ENCODE measurements at regions of chr3 and their contacts with region 1.

Region 1: GRCh38 chr3:24237971-24238767 is 256.5 kb downstream of the THRB start:
- DNase-seq: peak; percentile 69
- H3K4me3 ChIP-seq: no peak overlapping the region
- H3K27ac ChIP-seq: peak overlapping the region; percentile 8 to 24
- H3K4me1 ChIP-seq: no peaks in the 10 kb centered on the region
- H3K27me3 ChIP-seq: no peaks in the 10 kb centered on the region
- CTCF ChIP-seq: peak; percentile 59 to 85 (median 76)
- POLR2A ChIP-seq: no peak

Region 2: DNA sequence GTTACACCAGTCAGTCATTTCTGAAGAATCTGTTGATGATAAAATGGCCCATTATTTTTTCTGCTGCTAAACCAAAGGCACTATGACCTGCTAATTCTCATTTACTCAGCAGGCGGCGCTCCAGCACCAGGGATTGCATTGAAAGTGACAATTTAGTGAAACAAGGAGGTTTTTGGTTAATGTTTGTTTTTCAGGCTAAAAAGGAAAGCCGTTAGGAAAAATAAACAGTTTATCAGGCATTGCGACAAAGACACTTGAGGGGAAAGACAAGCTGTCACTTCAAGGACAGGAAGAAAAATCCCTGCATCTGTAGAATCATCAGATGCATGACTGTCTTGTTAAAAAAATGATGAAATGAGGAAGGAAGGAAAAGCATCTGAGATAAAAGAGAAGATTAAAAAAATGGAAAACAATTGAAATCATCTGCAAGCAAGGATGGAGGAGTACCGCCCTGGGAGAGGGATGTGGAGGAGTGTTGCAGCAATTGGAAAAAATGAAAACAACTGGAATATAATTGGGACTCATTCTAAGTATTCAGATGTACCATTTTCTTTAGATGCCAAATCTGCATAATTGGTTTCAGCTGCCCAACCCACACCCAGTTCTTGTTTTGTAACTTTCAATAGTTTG is 239.0 kb before region 1 on chr3:
- intact Hi-C with region 1: loop called (anchors 2 kb)
- DNase-seq: peak; percentile 58
- H3K4me3 ChIP-seq: no peak overlapping the region
- H3K27ac ChIP-seq: no peak overlapping the region
- H3K4me1 ChIP-seq: no peaks in the 10 kb centered on the region
- H3K27me3 ChIP-seq: no peaks in the 10 kb centered on the region
- CTCF ChIP-seq: peak; percentile 59 to 94 (median 86)
- POLR2A ChIP-seq: no peak

Region 3: GRCh38 chr3:24069045-24069444 is 169.1 kb before region 1 on chr3:
- intact Hi-C with region 1: loop called (anchors 5 kb)
- DNase-seq: no peak
- H3K4me3 ChIP-seq: no peak overlapping the region
- H3K27ac ChIP-seq: no peak overlapping the region
- H3K4me1 ChIP-seq: no peaks in the 10 kb centered on the region
- H3K27me3 ChIP-seq: no peaks in the 10 kb centered on the region
- CTCF ChIP-seq: peak in 2 of 4 experiments; percentile 33 to 39
- POLR2A ChIP-seq: no peak

Region 4: DNA sequence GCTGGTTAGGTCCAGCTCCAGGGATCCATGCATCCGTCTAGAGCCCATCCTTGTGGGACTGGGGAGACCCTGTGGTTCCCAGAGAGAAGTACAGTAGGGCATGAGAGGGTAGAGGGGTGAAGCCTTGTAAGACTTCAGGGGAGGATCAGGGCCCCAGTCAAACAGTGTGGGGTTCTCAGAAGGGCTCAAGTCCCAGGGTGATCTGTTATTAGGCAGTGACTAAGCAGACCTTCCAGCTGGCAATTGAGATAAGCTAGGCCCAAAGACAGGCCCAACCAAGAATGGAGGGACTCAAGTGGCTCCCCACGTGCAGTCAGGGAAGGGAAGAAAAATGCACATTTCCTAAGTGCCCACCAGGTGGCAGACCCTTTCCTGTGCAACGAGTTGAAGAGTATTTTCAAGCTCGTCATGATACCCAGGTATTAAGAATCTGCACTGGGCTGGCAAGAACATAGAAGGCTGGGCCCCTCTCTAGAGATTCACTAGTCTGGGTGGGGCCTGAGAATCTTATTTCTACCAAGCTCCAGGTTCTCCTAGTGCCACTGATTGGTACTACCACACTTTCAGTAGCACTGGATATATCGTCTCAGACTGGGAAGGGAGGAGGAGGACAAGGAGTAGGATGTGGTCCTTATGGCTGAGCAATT is 52.3 kb before region 1 on chr3:
- intact Hi-C with region 1: loop called (anchors 5 kb)
- DNase-seq: peak; percentile 31
- H3K4me3 ChIP-seq: no peak overlapping the region
- H3K27ac ChIP-seq: no peak overlapping the region
- H3K4me1 ChIP-seq: no peaks in the 10 kb centered on the region
- H3K27me3 ChIP-seq: no peaks in the 10 kb centered on the region
- CTCF ChIP-seq: peak; percentile 33 to 68 (median 62)
- POLR2A ChIP-seq: no peak

Region 5: GRCh38 chr3:24963762-24964625 is 725.8 kb after region 1 on chr3:
- intact Hi-C with region 1: no loop called
- DNase-seq: no peak
- H3K4me3 ChIP-seq: no peak overlapping the region
- H3K27ac ChIP-seq: no peak overlapping the region
- H3K4me1 ChIP-seq: no peaks in the 10 kb centered on the region
- H3K27me3 ChIP-seq: no peaks in the 10 kb centered on the region
- CTCF ChIP-seq: peak; percentile 39 to 71 (median 55)
- POLR2A ChIP-seq: no peak

Measured in prostate gland (tissue), 2 donors.